Panc1 (cell line): ENCODE measurements at regions of chr2 and their contacts with region 1.

Region 1: GRCh38 chr2:63073994-63074393 is 23.4 kb downstream of the OTX1 start:
- DNase-seq: no peak
- ATAC-seq: no peak
- H3K4me3 ChIP-seq: no peak overlapping the region
- H3K27ac ChIP-seq: no peak overlapping the region
- H3K4me1 ChIP-seq: no peaks in the 10 kb centered on the region
- H3K27me3 ChIP-seq: no peaks in the 10 kb centered on the region; the same call in 1 of the 2 replicates
- CTCF ChIP-seq: no peak

Region 2: GRCh38 chr2:61775956-61776570 is 1297.9 kb before region 1 on chr2:
- CTCF ChIA-PET with region 1: no interaction called
- POLR2A ChIA-PET with region 1: interaction called, 12 read pairs
- in situ Hi-C with region 1: no loop called
- intact Hi-C with region 1: no loop called
- DNase-seq: no peak
- ATAC-seq: no peak
- H3K4me3 ChIP-seq: no peak overlapping the region
- H3K27ac ChIP-seq: no peak overlapping the region
- H3K4me1 ChIP-seq: no peaks in the 10 kb centered on the region
- H3K27me3 ChIP-seq: no peaks in the 10 kb centered on the region
- CTCF ChIP-seq: no peak

Region 3: DNA sequence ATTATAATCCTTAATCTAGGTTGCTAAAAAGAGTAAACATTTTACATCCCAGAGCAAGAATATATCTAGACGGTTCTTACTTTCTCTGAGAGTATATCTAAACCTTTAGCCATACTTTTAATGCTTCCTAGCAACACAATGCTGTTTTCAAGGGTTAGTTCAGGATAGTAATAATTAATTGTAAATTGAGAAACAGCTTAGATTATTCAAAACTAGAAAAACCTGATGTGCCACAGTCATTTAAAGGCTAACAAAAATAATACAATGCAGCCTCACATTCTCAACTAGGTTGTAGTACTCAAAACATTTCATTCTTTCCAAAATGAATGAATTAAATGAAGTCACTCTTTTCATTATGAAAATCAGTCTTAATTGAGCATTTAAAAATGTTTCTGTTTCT is 126.6 kb before region 1 on chr2:
- CTCF ChIA-PET with region 1: no interaction called
- POLR2A ChIA-PET with region 1: no interaction called
- in situ Hi-C with region 1: no loop called
- intact Hi-C with region 1: no loop called
- DNase-seq: no peak
- ATAC-seq: no peak
- H3K4me3 ChIP-seq: no peak overlapping the region
- H3K27ac ChIP-seq: no peak overlapping the region
- H3K4me1 ChIP-seq: no peaks in the 10 kb centered on the region
- H3K27me3 ChIP-seq: no peaks in the 10 kb centered on the region
- CTCF ChIP-seq: no peak

Region 4: DNA sequence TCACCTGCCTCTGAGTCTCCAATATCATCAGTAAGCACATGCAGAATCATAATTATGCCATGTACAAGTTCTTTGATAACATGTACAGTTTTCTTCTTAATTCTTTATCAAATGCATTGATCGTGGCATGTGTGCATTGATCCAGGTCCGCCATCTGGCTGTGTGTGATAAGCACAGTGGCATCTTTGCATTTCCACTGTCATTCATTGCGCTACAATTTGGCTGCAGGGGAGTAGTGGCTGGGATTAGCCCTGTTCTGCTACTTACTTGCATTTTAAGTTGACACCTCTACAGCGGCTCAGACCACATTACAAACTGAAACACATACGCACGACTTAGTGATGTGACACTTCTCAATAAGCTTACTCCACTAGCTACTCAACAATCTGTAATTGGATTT is 107.0 kb before region 1 on chr2:
- CTCF ChIA-PET with region 1: no interaction called
- POLR2A ChIA-PET with region 1: no interaction called
- in situ Hi-C with region 1: no loop called
- intact Hi-C with region 1: no loop called
- DNase-seq: no peak
- ATAC-seq: no peak
- H3K4me3 ChIP-seq: no peak overlapping the region
- H3K27ac ChIP-seq: no peak overlapping the region
- H3K4me1 ChIP-seq: no peaks in the 10 kb centered on the region
- H3K27me3 ChIP-seq: no peaks in the 10 kb centered on the region
- CTCF ChIP-seq: no peak

Region 5: DNA sequence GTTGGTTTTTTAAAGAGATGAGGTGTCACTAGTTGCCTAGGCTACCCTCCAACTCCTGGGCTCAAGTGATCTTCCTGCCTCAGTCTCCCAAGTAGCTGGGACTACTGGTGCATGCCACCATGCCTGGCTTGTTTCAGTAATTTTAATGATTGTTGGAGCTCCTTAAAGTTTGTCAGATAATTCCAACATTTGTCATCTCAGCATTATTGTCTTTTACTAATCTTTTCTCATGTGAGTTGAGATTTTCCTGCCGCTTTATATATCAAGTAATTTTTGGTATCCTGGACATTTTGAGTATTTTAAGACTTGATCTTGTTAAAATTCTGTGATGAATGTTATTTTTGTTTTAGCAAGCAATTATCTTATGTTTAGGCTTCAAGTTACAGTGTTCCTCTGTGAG is 85.3 kb after region 1 on chr2:
- CTCF ChIA-PET with region 1: interaction called, 12 read pairs
- POLR2A ChIA-PET with region 1: no interaction called
- in situ Hi-C with region 1: no loop called
- intact Hi-C with region 1: no loop called
- DNase-seq: no peak
- ATAC-seq: no peak
- H3K4me3 ChIP-seq: no peak overlapping the region
- H3K27ac ChIP-seq: no peak overlapping the region
- H3K4me1 ChIP-seq: no peaks in the 10 kb centered on the region
- H3K27me3 ChIP-seq: no peaks in the 10 kb centered on the region
- CTCF ChIP-seq: no peak